Pancreas (tissue), 10 donors: ENCODE measurements at regions of chr17 and their contacts with region 1.

Region 1: DNA sequence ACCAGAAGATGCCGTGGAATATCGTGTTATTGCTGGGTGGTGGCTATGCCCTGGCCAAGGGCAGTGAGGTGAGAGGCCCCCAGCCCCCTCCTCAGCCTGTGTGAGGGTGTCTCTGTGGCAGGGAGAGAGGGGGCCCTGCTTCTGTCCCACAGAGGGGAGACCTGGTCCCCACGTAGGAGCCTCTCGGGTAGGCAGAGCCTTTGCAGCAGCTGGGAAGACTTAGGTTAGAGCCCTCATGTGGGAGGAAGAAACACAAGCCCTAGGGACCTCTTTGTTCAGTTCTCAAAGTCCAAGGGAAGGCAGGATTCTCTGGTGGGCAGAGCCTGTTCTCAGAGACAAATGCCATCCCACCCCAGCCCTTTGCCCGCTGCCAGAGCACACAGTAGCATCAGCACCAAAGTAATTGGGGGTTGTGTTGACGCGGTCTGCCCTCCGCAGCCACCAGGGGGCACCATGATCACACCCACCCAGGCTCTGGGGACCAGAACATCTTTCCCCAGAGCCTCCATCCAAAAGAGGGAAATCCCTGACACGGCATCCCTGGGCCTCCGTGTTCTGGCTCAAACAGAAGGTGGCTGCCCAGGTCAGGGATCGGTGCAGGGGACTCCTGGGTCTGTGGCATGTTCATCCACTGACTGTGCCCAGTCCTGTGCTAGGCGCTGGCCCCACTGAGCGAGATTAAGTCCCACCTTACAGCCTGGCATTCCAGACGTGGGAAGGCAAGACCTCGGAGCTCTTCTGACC is 11.5 kb upstream of the FOXN1 start:
- DNase-seq: peak; percentile 60 to 94 (median 82)
- ATAC-seq: peak; percentile 44 to 79 (median 77)
- H3K4me3 ChIP-seq: no peak overlapping the region
- H3K27ac ChIP-seq: no peak overlapping the region
- H3K4me1 ChIP-seq: peaks cover 17 to 24% (median 20%) of the 10 kb centered on the region in 3 donors
- H3K27me3 ChIP-seq: no peaks in the 10 kb centered on the region
- CTCF ChIP-seq: peak; percentile 77 to 89 (median 82)

Region 2: DNA sequence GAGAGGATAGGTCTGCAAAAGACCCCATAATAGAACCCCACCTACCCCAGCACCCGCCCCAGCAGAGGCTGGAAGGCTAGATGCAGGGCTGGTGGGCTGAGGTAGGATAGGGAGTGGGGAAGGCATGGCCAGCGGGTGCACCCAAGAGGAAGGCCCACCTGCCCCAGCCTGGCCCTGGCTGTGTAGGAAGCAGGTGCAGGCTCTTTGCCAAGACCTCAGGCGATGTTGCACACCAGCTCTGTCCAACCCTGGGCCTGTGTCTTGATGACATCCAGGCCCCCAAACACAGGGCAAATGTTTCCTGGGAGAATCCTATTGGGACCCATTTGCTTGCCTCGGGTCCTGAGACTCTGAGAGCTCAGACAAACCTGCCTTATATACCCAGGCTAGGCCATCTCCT is 45.6 kb after region 1 on chr17:
- intact Hi-C with region 1: loop called in 2 of 3 experiments (anchors 2 kb)
- DNase-seq: peak in 1 of 6 donors; percentile 51
- ATAC-seq: peak in 2 of 4 donors; percentile 14 to 18
- H3K4me3 ChIP-seq: no peak overlapping the region
- H3K27ac ChIP-seq: no peak overlapping the region
- H3K4me1 ChIP-seq: no peaks in the 10 kb centered on the region
- H3K27me3 ChIP-seq: no peaks in the 10 kb centered on the region
- CTCF ChIP-seq: no peak

Region 3: DNA sequence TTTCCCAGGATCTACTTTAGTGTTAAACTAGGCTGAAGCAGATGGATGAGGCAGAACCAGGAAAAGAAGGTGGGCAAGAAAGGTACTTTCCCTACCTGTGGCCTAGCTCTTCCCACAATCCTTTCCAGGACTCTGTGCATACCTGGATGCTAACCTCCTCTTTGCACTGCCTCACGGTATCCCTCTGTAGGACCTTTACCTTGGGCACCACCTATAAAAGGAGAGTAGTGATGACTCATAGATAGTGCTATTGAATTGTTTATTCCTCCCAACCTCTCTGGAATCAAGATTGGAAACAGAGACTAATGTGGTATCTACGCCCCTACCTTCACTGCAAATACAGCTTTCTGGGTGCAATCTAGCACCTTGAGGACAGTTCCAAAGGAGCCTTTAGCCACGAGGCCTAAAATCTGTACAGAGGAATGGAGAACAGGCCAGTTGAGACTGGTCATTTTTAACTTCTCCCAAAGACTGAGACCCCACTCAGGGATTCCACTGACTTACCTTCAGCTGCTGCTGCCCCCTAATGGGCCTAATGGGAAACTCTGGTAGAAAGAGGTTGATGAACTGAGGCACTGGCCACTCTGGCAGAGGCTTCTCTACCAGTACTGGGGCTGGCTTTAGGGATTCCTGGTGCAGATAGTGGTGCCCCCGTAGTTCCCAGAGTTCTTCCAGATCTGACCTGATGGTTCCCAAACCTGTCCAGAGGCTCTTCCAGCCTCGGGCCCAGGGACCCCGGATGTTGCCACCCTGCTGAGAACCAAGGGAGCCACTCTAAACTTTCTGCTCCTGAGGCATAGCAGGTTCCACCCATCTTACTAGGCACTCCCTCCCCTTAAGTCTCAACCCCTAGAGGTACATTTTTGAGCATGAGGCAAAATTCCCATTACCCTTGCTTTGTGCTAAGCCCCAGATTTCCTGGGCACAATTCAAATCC is 118.6 kb after region 1 on chr17:
- intact Hi-C with region 1: loop called in 1 of 3 experiments (anchors 10 kb)
- DNase-seq: peak in 1 of 6 donors; percentile 27
- ATAC-seq: peak; percentile 46 to 72 (median 68)
- H3K4me3 ChIP-seq: no peak overlapping the region
- H3K27ac ChIP-seq: no peak overlapping the region
- H3K4me1 ChIP-seq: no peaks in the 10 kb centered on the region
- H3K27me3 ChIP-seq: no peaks in the 10 kb centered on the region
- CTCF ChIP-seq: peak in 3 of 4 donors; percentile 24 to 67 (median 38)